CD8-positive, alpha-beta T cell (primary cell): ENCODE measurements at regions of chr9 and their contacts with region 1.

Region 1: DNA sequence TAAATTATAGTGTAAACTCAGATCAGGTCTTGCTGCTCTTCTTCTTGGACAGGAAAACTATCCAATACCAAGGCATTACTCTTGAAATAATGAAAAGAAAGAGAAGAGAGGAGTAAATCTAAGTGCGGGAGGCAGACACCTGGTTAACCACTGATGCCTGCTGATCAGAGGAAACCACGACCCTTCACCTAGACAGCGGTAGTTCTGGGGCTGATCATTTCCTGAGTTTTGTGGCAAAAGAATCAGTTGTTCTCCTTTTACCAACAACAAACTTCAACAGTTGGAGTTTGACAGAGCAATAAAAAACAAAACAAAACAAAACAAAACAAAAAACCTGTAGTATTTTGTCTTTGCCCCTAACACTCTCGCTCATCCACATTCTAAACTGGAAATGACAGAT is 3.0 kb downstream of the RLN1 start:
- DNase-seq: peak in 5 of 9 experiments; percentile 23 to 69 (median 47)
- ATAC-seq: peak; percentile 19
- H3K4me3 ChIP-seq: peak overlapping the region; percentile 2 to 31
- H3K4me3 Mint-ChIP-seq: peak overlapping the region; percentile 71
- H3K27ac ChIP-seq: peak overlapping the region; percentile 28 to 30
- H3K27ac Mint-ChIP-seq: peak overlapping the region; percentile 89
- H3K4me1 ChIP-seq: peaks cover 27% of the 10 kb centered on the region
- H3K4me1 Mint-ChIP-seq: peaks cover 54% of the 10 kb centered on the region
- H3K27me3 ChIP-seq: no peaks in the 10 kb centered on the region
- H3K27me3 Mint-ChIP-seq: no peaks in the 10 kb centered on the region
- CTCF ChIP-seq: no peak

Region 2: GRCh38 chr9:4792572-4793458 is 543.9 kb before region 1 on chr9 and contains the start of gene RCL1:
- CTCF ChIA-PET with region 1: no interaction called
- POLR2A ChIA-PET with region 1: no interaction called
- intact Hi-C with region 1: loop called in 1 of 2 experiments (anchors 5 kb)
- DNase-seq: peak; percentile 92 to 98 (median 95)
- ATAC-seq: peak; percentile 90
- H3K4me3 ChIP-seq: peak within 1 kb of the TSS; percentile 92 to 98
- H3K4me3 Mint-ChIP-seq: peak within 1 kb of the TSS; percentile 95
- H3K27ac ChIP-seq: peak within 1 kb of the TSS; percentile 90 to 92
- H3K27ac Mint-ChIP-seq: peak within 1 kb of the TSS; percentile 96
- H3K4me1 ChIP-seq: peaks cover 30% of the 10 kb centered on the region
- H3K4me1 Mint-ChIP-seq: peaks cover 47% of the 10 kb centered on the region
- H3K27me3 ChIP-seq: no peaks in the 10 kb centered on the region
- H3K27me3 Mint-ChIP-seq: no peaks in the 10 kb centered on the region
- CTCF ChIP-seq: no peak
- total RNA-seq, gene RCL1: 30.8 to 35.0 TPM

Region 3: GRCh38 chr9:5301544-5301943 is 35.1 kb before region 1 on chr9:
- CTCF ChIA-PET with region 1: no interaction called
- POLR2A ChIA-PET with region 1: no interaction called
- intact Hi-C with region 1: loop called in 1 of 2 experiments (anchors 5 kb)
- DNase-seq: peak in 3 of 9 experiments; percentile 23 to 43 (median 26)
- ATAC-seq: no peak
- H3K4me3 ChIP-seq: no peak overlapping the region
- H3K4me3 Mint-ChIP-seq: peak overlapping the region; percentile 58
- H3K27ac ChIP-seq: no peak overlapping the region
- H3K27ac Mint-ChIP-seq: peak overlapping the region; percentile 45
- H3K4me1 ChIP-seq: peaks cover 15% of the 10 kb centered on the region
- H3K4me1 Mint-ChIP-seq: peaks cover 26% of the 10 kb centered on the region
- H3K27me3 ChIP-seq: no peaks in the 10 kb centered on the region
- H3K27me3 Mint-ChIP-seq: no peaks in the 10 kb centered on the region
- CTCF ChIP-seq: no peak

Region 4: GRCh38 chr9:5352637-5353455 is 16.2 kb after region 1 on chr9:
- CTCF ChIA-PET with region 1: no interaction called
- POLR2A ChIA-PET with region 1: interaction called, 5 read pairs
- intact Hi-C with region 1: loop called in 1 of 2 experiments (anchors 2 kb)
- DNase-seq: peak in 5 of 9 experiments; percentile 7 to 60 (median 31)
- ATAC-seq: peak; percentile 69
- H3K4me3 ChIP-seq: peak overlapping the region in 1 of 2 experiments; percentile 11
- H3K4me3 Mint-ChIP-seq: peak overlapping the region; percentile 56
- H3K27ac ChIP-seq: peak overlapping the region in 1 of 2 experiments; percentile 44
- H3K27ac Mint-ChIP-seq: peak overlapping the region; percentile 72
- H3K4me1 ChIP-seq: peaks cover 38% of the 10 kb centered on the region
- H3K4me1 Mint-ChIP-seq: peaks cover 44% of the 10 kb centered on the region
- H3K27me3 ChIP-seq: no peaks in the 10 kb centered on the region
- H3K27me3 Mint-ChIP-seq: no peaks in the 10 kb centered on the region
- CTCF ChIP-seq: no peak